Activated CD4-positive, alpha-beta T cell treated with anti-CD3 and anti-CD28 coated beads for 36 hours (primary cell): ENCODE measurements at regions of chr7 and their contacts with region 1.

Region 1: GRCh38 chr7:33109005-33109757 is at the start of gene RP9:
- DNase-seq: peak; percentile 87
- ATAC-seq: peak; percentile 93
- H3K4me3 Mint-ChIP-seq: peak within 1 kb of the TSS; percentile 88
- H3K27ac Mint-ChIP-seq: peak within 1 kb of the TSS; percentile 76
- H3K4me1 Mint-ChIP-seq: peaks cover 32% of the 10 kb centered on the region
- H3K27me3 Mint-ChIP-seq: peaks cover 5% of the 10 kb centered on the region
- total RNA-seq, gene RP9: 17.2 to 19.2 TPM

Region 2: GRCh38 chr7:32490127-32490822 is 618.9 kb before region 1 on chr7 and contains the start of gene LSM5:
- CTCF ChIA-PET with region 1: no interaction called
- POLR2A ChIA-PET with region 1: no interaction called
- intact Hi-C with region 1: loop called (anchors 2 to 5 kb)
- DNase-seq: peak; percentile 95
- ATAC-seq: peak; percentile 70
- H3K4me3 Mint-ChIP-seq: peak within 1 kb of the TSS; percentile 82
- H3K27ac Mint-ChIP-seq: peak within 1 kb of the TSS; percentile 99
- H3K4me1 Mint-ChIP-seq: peaks cover 27% of the 10 kb centered on the region
- H3K27me3 Mint-ChIP-seq: no peaks in the 10 kb centered on the region
- total RNA-seq, gene LSM5: 75.6 to 135 TPM

Region 3: DNA sequence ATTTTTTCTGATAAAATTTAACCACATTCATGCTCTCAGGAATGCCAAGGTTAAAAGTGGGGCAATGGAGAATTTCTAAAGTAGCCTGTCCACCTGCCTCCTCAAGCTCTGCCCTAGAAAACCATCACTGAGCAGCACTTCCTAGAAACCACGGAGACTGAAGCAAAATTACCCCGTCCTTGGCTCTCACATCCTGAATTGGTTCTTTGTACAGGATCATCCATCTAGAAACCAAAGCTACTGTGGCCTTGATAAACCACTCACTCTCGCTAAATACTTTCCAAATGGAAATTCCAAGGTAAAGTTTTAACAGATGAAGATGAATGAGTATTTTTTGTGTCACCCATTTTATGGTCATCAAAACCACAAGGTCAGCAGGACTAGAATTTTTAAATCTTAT is 517.2 kb before region 1 on chr7:
- CTCF ChIA-PET with region 1: no interaction called
- POLR2A ChIA-PET with region 1: no interaction called
- intact Hi-C with region 1: no loop called
- DNase-seq: no peak
- ATAC-seq: no peak
- H3K4me3 Mint-ChIP-seq: no peak overlapping the region
- H3K27ac Mint-ChIP-seq: no peak overlapping the region
- H3K4me1 Mint-ChIP-seq: peaks cover 18% of the 10 kb centered on the region
- H3K27me3 Mint-ChIP-seq: no peaks in the 10 kb centered on the region

Region 4: DNA sequence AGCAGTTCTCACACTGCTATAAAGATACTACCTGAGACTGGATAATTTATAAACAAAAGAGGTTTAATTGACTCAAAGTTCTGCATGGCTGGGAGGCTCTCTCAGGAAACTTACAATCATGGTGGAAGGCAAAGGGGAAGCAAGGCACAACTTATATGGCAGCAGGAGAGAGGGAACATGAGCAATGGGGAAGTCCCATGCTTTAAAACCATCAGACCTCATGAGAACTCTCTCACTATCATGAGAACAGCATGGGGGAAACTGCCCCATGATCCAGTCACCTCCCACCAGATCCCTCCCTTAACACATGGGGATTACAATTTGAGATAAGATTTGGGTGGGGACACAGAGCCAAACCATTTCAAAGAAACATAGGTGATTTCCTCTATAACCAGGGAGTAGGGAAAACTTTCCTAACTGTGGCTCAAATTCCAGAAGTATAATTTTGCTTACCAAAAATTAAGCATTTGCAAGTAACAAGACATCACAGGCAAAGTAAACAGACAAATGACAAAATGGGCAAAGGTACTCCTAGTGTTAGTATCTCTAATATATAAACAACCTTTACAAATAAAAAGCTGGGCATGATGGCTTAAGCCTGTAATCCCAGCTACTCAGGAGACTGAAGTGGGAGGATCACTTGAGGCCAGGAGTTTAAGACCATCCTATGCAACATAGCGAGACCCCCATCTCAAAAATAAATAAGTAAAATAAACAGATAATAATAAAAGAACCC is 305.6 kb before region 1 on chr7:
- CTCF ChIA-PET with region 1: interaction called, 11 read pairs
- POLR2A ChIA-PET with region 1: interaction called, 4 read pairs
- intact Hi-C with region 1: loop called (anchors 1 to 2 kb)
- DNase-seq: no peak
- ATAC-seq: no peak
- H3K4me3 Mint-ChIP-seq: no peak overlapping the region
- H3K27ac Mint-ChIP-seq: no peak overlapping the region
- H3K4me1 Mint-ChIP-seq: no peaks in the 10 kb centered on the region
- H3K27me3 Mint-ChIP-seq: no peaks in the 10 kb centered on the region

Region 5: DNA sequence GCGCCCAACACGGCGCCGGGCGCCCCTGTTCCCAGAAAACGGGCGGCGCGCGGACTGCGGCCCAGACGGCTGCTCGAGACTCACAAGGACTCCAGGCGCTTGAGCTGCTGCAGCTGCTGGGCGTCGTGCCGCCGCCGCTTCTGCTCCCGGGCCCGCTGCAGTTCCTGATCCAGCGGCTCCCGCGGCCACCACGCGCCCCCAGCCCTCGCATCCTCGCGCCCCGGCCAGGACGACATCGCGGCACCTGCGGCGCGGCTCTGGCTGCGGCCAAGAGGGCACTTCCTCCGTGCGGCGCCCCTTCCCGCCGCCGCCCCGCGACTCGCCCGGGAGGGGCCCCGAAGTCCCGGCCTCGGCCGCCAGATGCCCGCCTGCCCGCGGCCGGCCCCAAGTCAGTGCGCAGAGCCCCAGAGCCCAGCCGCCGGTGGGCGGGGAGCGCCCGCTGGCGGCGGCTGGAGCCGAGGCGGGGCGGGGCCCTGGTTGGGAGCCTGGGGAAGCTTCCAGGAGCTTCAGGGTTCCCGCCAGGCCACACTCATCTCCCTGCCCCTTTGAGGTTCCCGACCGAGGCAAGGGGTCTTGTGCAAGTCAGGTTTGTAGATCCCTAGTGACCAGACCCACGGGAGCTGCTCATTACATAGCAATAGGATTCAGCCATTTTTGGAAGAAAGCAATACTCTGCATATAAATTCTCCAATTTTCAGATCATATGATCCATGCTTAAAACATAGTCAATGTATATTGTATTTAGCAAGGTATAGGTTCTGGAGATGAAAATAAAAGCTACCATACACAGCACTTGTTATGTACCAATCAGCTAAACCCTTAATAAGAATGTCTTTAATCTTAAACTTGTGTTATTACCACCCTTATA is 166.2 kb before region 1 on chr7:
- CTCF ChIA-PET with region 1: interaction called, 8 read pairs
- POLR2A ChIA-PET with region 1: no interaction called
- intact Hi-C with region 1: loop called in 1 of 2 experiments (anchors 1 kb)
- DNase-seq: peak; percentile 85
- ATAC-seq: peak; percentile 93
- H3K4me3 Mint-ChIP-seq: peak overlapping the region; percentile 87
- H3K27ac Mint-ChIP-seq: no peak overlapping the region
- H3K4me1 Mint-ChIP-seq: peaks cover 10% of the 10 kb centered on the region
- H3K27me3 Mint-ChIP-seq: peaks cover 9% of the 10 kb centered on the region

Region 6: GRCh38 chr7:33050535-33051318 is 58.5 kb before region 1 on chr7:
- CTCF ChIA-PET with region 1: interaction called, 10 read pairs
- POLR2A ChIA-PET with region 1: no interaction called
- intact Hi-C with region 1: no loop called
- DNase-seq: peak; percentile 30
- ATAC-seq: peak; percentile 60
- H3K4me3 Mint-ChIP-seq: no peak overlapping the region
- H3K27ac Mint-ChIP-seq: no peak overlapping the region
- H3K4me1 Mint-ChIP-seq: peaks cover 49% of the 10 kb centered on the region
- H3K27me3 Mint-ChIP-seq: no peaks in the 10 kb centered on the region

Region 7: GRCh38 chr7:33128990-33129805 is 20.0 kb after region 1 on chr7 and contains the start of gene BBS9:
- CTCF ChIA-PET with region 1: interaction called, 20 read pairs
- POLR2A ChIA-PET with region 1: no interaction called
- intact Hi-C with region 1: loop called (anchors 1 to 2 kb)
- DNase-seq: peak; percentile 96
- ATAC-seq: peak; percentile 99
- H3K4me3 Mint-ChIP-seq: peak within 1 kb of the TSS; percentile 95
- H3K27ac Mint-ChIP-seq: peak within 1 kb of the TSS; percentile 89
- H3K4me1 Mint-ChIP-seq: peaks cover 16% of the 10 kb centered on the region
- H3K27me3 Mint-ChIP-seq: no peaks in the 10 kb centered on the region
- total RNA-seq, gene BBS9: 4.1 to 9.9 TPM